MCF 10A (cell line): ENCODE measurements at regions of chr20 and their contacts with region 1.

Region 1: DNA sequence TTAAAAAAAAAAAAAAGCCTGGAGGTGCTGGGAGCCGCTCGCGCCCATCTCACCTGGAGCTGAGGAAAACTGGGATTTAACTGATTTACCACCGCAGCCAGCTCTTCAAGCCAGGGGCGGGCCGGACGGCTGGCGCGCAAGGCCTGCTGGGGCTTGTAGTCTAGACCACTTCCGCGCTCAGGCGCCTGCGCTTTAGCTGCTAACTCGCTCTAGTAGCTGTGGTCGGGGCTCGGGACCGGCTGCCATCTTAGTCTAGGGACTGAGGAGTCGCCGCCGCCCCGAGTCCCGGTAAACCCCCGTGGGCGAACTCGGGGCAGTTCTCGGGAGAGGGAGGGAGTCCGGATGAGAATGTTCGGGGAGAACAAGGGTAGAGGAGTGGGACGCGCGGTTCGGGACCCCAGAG is at the start of gene ITCH:
- DNase-seq: peak; percentile 96
- H3K4me3 Mint-ChIP-seq: peak within 1 kb of the TSS; percentile 95
- H3K27ac Mint-ChIP-seq: peak within 1 kb of the TSS; percentile 100
- H3K4me1 Mint-ChIP-seq: peaks cover 13% of the 10 kb centered on the region
- H3K27me3 Mint-ChIP-seq: no peaks in the 10 kb centered on the region
- CTCF ChIP-seq: no peak
- total RNA-seq, gene ITCH: 57.3 and 68.3 TPM in 2 replicates

Region 2: GRCh38 chr20:34282041-34282440 is 81.0 kb before region 1 on chr20:
- CTCF ChIA-PET with region 1: no interaction called
- POLR2A ChIA-PET with region 1: no interaction called
- intact Hi-C with region 1: no loop called
- DNase-seq: no peak
- H3K4me3 Mint-ChIP-seq: no peak overlapping the region
- H3K27ac Mint-ChIP-seq: no peak overlapping the region
- H3K4me1 Mint-ChIP-seq: no peaks in the 10 kb centered on the region
- H3K27me3 Mint-ChIP-seq: no peaks in the 10 kb centered on the region
- CTCF ChIP-seq: no peak

Region 3: GRCh38 chr20:34302723-34303528 is 60.1 kb before region 1 on chr20 and contains the start of gene AHCY:
- CTCF ChIA-PET with region 1: interaction called, 3 read pairs
- POLR2A ChIA-PET with region 1: interaction called, 19 read pairs
- intact Hi-C with region 1: no loop called
- DNase-seq: peak; percentile 98
- H3K4me3 Mint-ChIP-seq: no peak within 1 kb of the TSS
- H3K27ac Mint-ChIP-seq: peak within 1 kb of the TSS; percentile 83
- H3K4me1 Mint-ChIP-seq: no peaks in the 10 kb centered on the region
- H3K27me3 Mint-ChIP-seq: no peaks in the 10 kb centered on the region
- CTCF ChIP-seq: no peak
- total RNA-seq, gene AHCY: 101 and 175 TPM in 2 replicates

Region 4: GRCh38 chr20:34350095-34350494 is 13.0 kb before region 1 on chr20:
- CTCF ChIA-PET with region 1: interaction called, 4 read pairs
- POLR2A ChIA-PET with region 1: interaction called, 15 read pairs
- intact Hi-C with region 1: no loop called
- DNase-seq: no peak
- H3K4me3 Mint-ChIP-seq: no peak overlapping the region
- H3K27ac Mint-ChIP-seq: no peak overlapping the region
- H3K4me1 Mint-ChIP-seq: no peaks in the 10 kb centered on the region
- H3K27me3 Mint-ChIP-seq: no peaks in the 10 kb centered on the region
- CTCF ChIP-seq: no peak

Region 5: GRCh38 chr20:34385464-34385863 is 22.4 kb after region 1 on chr20:
- CTCF ChIA-PET with region 1: interaction called, 3 read pairs
- POLR2A ChIA-PET with region 1: interaction called, 28 read pairs
- intact Hi-C with region 1: no loop called
- DNase-seq: no peak
- H3K4me3 Mint-ChIP-seq: no peak overlapping the region
- H3K27ac Mint-ChIP-seq: no peak overlapping the region
- H3K4me1 Mint-ChIP-seq: peaks cover 20% of the 10 kb centered on the region
- H3K27me3 Mint-ChIP-seq: no peaks in the 10 kb centered on the region
- CTCF ChIP-seq: no peak

Region 6: DNA sequence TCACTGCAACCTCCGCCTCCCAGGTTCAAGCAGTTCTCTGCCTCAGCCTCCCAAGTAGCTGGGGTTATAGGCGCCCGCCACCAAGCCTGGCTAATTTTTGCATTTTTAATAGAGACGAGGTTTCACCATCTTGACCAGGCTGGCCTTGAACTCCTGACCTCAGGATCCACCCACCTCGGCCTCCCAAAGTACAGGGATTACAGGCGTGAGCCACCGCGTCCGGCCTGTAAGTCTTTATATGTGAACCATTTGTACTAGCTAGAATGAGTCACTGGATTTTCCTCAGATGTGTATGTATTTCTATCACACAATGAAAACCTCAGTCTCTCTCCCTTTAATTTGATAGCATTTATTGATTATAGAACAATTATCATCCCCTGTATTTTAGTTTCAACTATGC is 34.0 kb after region 1 on chr20:
- CTCF ChIA-PET with region 1: interaction called, 4 read pairs
- POLR2A ChIA-PET with region 1: interaction called, 27 read pairs
- intact Hi-C with region 1: no loop called
- DNase-seq: no peak
- H3K4me3 Mint-ChIP-seq: no peak overlapping the region
- H3K27ac Mint-ChIP-seq: no peak overlapping the region
- H3K4me1 Mint-ChIP-seq: peaks cover 15% of the 10 kb centered on the region
- H3K27me3 Mint-ChIP-seq: no peaks in the 10 kb centered on the region
- CTCF ChIP-seq: no peak

Region 7: DNA sequence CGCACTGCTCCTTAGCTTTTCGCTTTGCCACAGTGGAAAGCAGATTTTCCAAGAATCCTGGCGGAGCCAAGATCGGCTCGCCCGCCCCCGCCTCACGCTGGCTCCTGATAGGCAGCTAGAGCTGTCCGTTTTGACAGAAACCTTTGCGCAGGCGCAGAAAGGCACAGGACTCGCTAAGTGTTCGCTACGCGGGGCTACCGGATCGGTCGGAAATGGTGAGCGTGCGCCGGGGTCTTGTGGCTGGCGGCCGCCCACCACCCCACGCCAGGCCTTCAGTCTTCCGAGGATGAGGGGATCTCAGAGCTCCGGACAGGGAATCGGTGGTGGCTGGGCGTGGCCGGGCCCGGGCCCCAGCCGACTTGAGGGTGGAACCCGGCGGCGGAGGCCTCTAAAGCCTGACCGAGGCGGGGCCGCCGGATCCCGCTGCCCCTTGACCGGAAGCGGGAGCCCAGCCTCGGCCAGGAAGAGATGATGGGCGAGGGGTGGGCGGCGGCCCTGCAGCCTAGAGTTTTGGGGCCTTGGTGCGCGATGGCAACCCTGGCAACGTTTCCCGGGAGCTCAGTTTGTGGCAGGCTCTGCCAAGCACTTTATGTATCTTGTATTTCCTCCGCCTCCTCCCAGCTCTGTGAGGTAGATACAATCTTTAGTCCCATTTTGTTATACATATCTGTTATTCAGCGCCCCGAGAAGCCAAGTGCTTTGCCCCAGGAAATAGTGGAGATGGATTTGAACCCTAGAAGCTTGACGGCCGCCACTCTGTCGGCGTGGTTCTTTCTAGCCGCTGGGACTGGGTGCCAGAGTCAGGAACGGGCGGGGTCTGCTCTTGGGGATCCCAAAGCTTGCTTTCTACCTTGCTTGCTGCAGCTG is 153.4 kb after region 1 on chr20 and contains the start of gene DYNLRB1:
- CTCF ChIA-PET with region 1: interaction called, 3 read pairs
- POLR2A ChIA-PET with region 1: interaction called, 32 read pairs
- intact Hi-C with region 1: no loop called
- DNase-seq: peak; percentile 97
- H3K4me3 Mint-ChIP-seq: peak within 1 kb of the TSS; percentile 97
- H3K27ac Mint-ChIP-seq: peak within 1 kb of the TSS; percentile 99
- H3K4me1 Mint-ChIP-seq: peaks cover 15% of the 10 kb centered on the region
- H3K27me3 Mint-ChIP-seq: no peaks in the 10 kb centered on the region
- CTCF ChIP-seq: no peak
- total RNA-seq, gene DYNLRB1: 127 and 145 TPM in 2 replicates